GM12878 (cell line): ENCODE measurements at regions of chr2 and their contacts with region 1.

Region 1: GRCh38 chr2:60818272-60818671 is 62.2 kb downstream of the PAPOLG start:
- DNase-seq: no peak
- ATAC-seq: peak; percentile 52
- H3K4me3 ChIP-seq: no peak overlapping the region
- H3K27ac ChIP-seq: no peak overlapping the region
- H3K4me1 ChIP-seq: no peaks in the 10 kb centered on the region; the same call in 1 of the 2 replicates
- H3K27me3 ChIP-seq: no peaks in the 10 kb centered on the region
- CTCF ChIP-seq: peak in 2 of 3 experiments; percentile 35 to 37; a peak in 4 of 6 replicates
- EP300 ChIP-seq: no peak
- POLR2A ChIP-seq: no peak
- RAD21 ChIP-seq: peak; percentile 55

Region 2: DNA sequence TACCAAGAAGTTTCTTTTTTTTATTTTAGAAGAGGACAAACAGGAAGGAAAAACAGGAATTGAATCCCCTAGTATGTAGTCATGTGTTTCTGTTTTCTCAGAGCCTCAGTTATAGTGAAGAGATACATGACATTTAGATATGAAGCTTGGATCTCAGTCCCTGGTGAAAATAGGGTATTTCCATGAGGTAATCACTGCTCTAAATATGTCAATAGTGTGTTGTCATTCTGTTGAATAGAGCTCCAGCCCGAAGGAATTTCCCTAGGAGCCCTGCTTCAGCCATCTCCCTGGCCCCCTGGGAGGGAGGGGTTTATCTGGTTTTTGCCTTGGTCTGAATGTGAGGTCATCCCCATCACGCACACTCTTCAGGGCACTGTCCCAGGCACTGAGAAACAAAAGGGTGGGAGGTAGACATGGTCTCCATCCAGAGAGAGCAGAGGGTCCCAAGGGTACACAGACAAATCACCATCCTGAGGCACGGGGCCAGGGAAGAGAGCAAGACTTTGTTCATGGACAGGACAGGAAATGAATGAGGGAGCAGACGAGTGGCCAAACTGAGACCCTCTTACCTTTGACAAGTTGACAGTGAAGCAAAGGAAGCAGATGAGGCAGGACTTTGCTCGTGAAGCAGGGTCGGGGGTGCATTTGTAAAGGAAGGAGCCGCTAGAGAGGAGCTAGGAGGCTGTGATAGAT is 16.1 kb after region 1 on chr2:
- CTCF ChIA-PET with region 1: interaction called, 18 read pairs
- POLR2A ChIA-PET with region 1: interaction called, 3 read pairs
- RAD21 ChIA-PET with region 1: interaction called, 16 read pairs
- SMC1A ChIA-PET with region 1: interaction called, 14 read pairs
- in situ Hi-C with region 1: no loop called
- intact Hi-C with region 1: no loop called
- DNase-seq: peak; percentile 63
- ATAC-seq: peak; percentile 74
- H3K4me3 ChIP-seq: no peak overlapping the region
- H3K27ac ChIP-seq: peak overlapping the region; percentile 63
- H3K4me1 ChIP-seq: peaks cover 68% of the 10 kb centered on the region
- H3K27me3 ChIP-seq: no peaks in the 10 kb centered on the region
- CTCF ChIP-seq: no peak
- EP300 ChIP-seq: peak; percentile 47 to 79; a peak in 2 of 4 replicates
- POLR2A ChIP-seq: no peak
- RAD21 ChIP-seq: peak; percentile 16; the same call in 1 of the 2 replicates

Region 3: GRCh38 chr2:60891180-60891579 is 72.9 kb after region 1 on chr2:
- CTCF ChIA-PET with region 1: interaction called, 4 read pairs
- POLR2A ChIA-PET with region 1: interaction called, 3 read pairs
- RAD21 ChIA-PET with region 1: no interaction called
- SMC1A ChIA-PET with region 1: interaction called, 10 read pairs
- in situ Hi-C with region 1: no loop called
- intact Hi-C with region 1: no loop called
- DNase-seq: no peak
- ATAC-seq: peak; percentile 54
- H3K4me3 ChIP-seq: no peak overlapping the region
- H3K27ac ChIP-seq: no peak overlapping the region
- H3K4me1 ChIP-seq: peaks cover 9% of the 10 kb centered on the region
- H3K27me3 ChIP-seq: no peaks in the 10 kb centered on the region
- CTCF ChIP-seq: no peak
- EP300 ChIP-seq: no peak
- POLR2A ChIP-seq: no peak
- RAD21 ChIP-seq: no peak